ENCODE measurements at regions of chr3 and their contacts with region 1.

Region 1: GRCh38 chr3:49411968-49412631 is at the starts of genes RHOA and TCTA:
- DNase-seq: peak; percentile 98 to 100 (median 99)
- H3K4me3 ChIP-seq: peak within 1 kb of the TSS; percentile 93
- H3K4me3 Mint-ChIP-seq: peak within 1 kb of the TSS; percentile 88 to 96 (median 94)
- H3K27ac ChIP-seq: peak within 1 kb of the TSS; percentile 95
- H3K27ac Mint-ChIP-seq: peak within 1 kb of the TSS; percentile 90 to 97 (median 96)
- H3K4me1 ChIP-seq: peaks cover 76% of the 10 kb centered on the region
- H3K4me1 Mint-ChIP-seq: peaks cover 69 to 82% (median 74%) of the 10 kb centered on the region in 3 donors
- H3K27me3 ChIP-seq: no peaks in the 10 kb centered on the region
- H3K27me3 Mint-ChIP-seq: peaks cover 0 to 2% of the 10 kb centered on the region in 2 donors
- total RNA-seq, gene RHOA: 478 to 506 TPM
- total RNA-seq, gene TCTA: 21.3 to 23.2 TPM

Region 2: GRCh38 chr3:49428697-49429100 is 16.6 kb after region 1 on chr3:
- CTCF ChIA-PET with region 1: interaction called, 10 read pairs
- POLR2A ChIA-PET with region 1: interaction called, 24 read pairs
- DNase-seq: no peak
- H3K4me3 ChIP-seq: peak overlapping the region; percentile 83
- H3K4me3 Mint-ChIP-seq: peak overlapping the region; percentile 89 to 99 (median 96)
- H3K27ac ChIP-seq: peak overlapping the region; percentile 87
- H3K27ac Mint-ChIP-seq: peak overlapping the region in 7 of 8 donors; percentile 59 to 98 (median 95)
- H3K4me1 ChIP-seq: peaks cover 4% of the 10 kb centered on the region
- H3K4me1 Mint-ChIP-seq: peaks cover 14 to 32% (median 28%) of the 10 kb centered on the region in 3 donors
- H3K27me3 ChIP-seq: no peaks in the 10 kb centered on the region
- H3K27me3 Mint-ChIP-seq: no peaks in the 10 kb centered on the region

Region 3: DNA sequence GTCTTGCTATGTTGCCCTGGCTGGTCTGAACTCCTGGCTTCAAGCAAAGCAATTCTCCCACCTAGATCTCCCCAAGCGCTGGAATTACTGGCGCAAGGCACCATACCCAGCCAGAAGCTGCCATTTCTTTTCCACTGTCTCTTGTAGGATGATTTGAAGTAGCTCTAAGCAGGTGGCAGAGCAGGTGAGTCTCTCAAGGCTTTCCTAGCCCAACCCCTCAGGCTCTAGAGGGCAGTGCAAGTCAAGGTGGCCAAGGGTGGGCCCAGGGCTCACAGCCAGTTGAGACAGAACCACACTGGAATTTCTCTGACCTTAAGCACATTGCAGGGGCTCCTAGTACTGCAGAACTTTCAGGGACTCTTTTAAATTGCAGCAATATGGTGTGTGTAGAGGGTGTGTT is 42.4 kb after region 1 on chr3:
- CTCF ChIA-PET with region 1: interaction called, 33 read pairs
- POLR2A ChIA-PET with region 1: interaction called, 5 read pairs
- DNase-seq: no peak
- H3K4me3 ChIP-seq: no peak overlapping the region
- H3K4me3 Mint-ChIP-seq: no peak overlapping the region
- H3K27ac ChIP-seq: no peak overlapping the region
- H3K27ac Mint-ChIP-seq: peak overlapping the region in 3 of 8 donors; percentile 2 to 79 (median 61)
- H3K4me1 ChIP-seq: no peaks in the 10 kb centered on the region
- H3K4me1 Mint-ChIP-seq: no peaks in the 10 kb centered on the region
- H3K27me3 ChIP-seq: no peaks in the 10 kb centered on the region
- H3K27me3 Mint-ChIP-seq: no peaks in the 10 kb centered on the region

Region 4: DNA sequence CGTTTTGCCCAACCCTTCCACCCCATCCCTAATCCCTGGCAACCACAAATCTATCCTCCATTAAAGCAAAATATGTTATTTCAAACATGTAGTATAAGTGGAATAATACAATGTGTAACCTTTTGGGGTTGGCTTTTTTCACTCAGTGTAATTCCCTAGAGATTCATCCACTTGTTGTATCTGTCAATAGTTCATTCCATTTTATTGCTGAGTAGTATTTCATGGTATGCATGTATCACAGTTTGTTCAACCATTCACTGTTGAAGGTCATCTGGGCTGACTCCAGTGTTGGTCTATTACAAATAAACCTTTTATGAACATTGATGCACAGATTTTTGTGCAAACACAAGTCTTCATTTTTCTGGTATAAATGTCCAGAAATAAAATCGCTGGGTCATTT is 180.9 kb after region 1 on chr3:
- CTCF ChIA-PET with region 1: no interaction called
- POLR2A ChIA-PET with region 1: no interaction called
- DNase-seq: no peak
- H3K4me3 ChIP-seq: no peak overlapping the region
- H3K4me3 Mint-ChIP-seq: no peak overlapping the region
- H3K27ac ChIP-seq: no peak overlapping the region
- H3K27ac Mint-ChIP-seq: no peak overlapping the region
- H3K4me1 ChIP-seq: no peaks in the 10 kb centered on the region
- H3K4me1 Mint-ChIP-seq: no peaks in the 10 kb centered on the region
- H3K27me3 ChIP-seq: no peaks in the 10 kb centered on the region
- H3K27me3 Mint-ChIP-seq: peaks cover 2 to 6% of the 10 kb centered on the region in 2 donors